Activated T-helper 2 cell treated with anti-CD3 and anti-CD28 coated beads, Interferon-gamma antibody, Interleukin-2, Interleukin-4, amounts not matched to agents 10 μg/mL and 5 μg/mL and 100 μg/mL, durations not matched to agents 14 hours and 24 hours and 36 hours (primary cell): ENCODE measurements at regions of chr7 and their contacts with region 1.

Region 1: DNA sequence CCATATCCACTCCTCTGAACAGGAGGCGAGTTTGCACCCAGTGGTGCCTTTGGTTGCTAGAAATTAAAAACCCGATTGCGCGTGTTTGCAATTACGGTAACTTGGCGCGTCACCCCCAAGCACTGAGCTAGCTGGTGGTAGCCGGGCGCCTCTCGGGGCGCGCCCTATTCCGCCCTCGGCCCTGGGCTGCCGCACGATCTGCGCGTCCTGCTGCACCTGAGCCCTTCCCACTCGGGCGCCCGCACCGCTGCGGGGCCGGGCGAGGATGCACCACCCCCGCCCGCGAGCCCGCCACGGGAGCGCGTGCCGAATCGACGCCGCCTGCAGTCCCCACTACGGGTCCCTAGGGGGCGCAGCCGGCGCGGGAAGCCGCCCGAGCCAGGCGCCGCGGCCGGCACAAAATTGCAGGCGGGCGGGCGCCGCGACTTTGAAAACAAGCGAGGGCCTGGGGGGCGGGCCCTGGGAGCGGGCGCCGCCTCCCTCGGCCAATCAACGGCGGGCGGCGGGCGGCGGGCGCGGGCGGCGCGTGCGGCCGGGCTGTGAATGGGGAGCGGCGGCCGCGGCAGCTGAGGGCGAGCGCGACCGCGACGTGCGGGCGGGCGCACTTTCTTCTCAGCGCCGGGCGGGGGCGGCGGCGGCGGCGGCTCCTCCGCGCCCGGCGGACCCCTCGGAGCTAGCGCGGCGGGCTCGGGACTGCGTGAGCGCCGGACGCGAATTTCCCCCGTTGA is at the start of gene SDK1:
- DNase-seq: peak; percentile 87
- H3K4me3 Mint-ChIP-seq: peak within 1 kb of the TSS; percentile 66
- H3K27ac Mint-ChIP-seq: no peak within 1 kb of the TSS
- H3K4me1 Mint-ChIP-seq: peaks cover 17% of the 10 kb centered on the region
- H3K27me3 Mint-ChIP-seq: peaks cover 59% of the 10 kb centered on the region
- total RNA-seq, gene SDK1: 0.48 and 1.2 TPM in 2 replicates

Region 2: DNA sequence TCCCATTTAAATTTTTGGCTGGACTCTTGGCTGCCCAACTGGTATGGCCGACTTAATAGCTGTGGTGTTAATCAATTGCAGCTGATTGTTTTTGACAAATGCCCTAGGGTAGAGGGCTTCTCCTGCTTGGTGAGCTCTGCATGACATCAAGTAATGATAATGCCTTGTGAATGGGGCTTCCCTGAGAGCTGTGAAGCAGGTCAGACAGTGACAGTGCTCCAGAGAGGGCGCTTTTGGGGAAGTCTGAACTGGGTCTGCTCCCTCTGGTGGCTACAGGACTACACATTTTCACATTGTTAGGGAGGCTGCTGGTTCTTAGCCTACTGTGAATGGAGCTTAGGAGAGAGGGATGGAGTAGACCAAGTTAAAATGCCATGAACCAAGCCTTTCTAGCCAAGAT is 99.0 kb after region 1 on chr7:
- intact Hi-C with region 1: loop called (anchors 10 kb)
- DNase-seq: no peak
- H3K4me3 Mint-ChIP-seq: no peak overlapping the region
- H3K27ac Mint-ChIP-seq: no peak overlapping the region
- H3K4me1 Mint-ChIP-seq: no peaks in the 10 kb centered on the region
- H3K27me3 Mint-ChIP-seq: peaks cover 17% of the 10 kb centered on the region

Region 3: GRCh38 chr7:3461923-3462322 is 161.1 kb after region 1 on chr7:
- intact Hi-C with region 1: loop called (anchors 2 kb)
- DNase-seq: peak; percentile 61
- H3K4me3 Mint-ChIP-seq: peak overlapping the region; percentile 55
- H3K27ac Mint-ChIP-seq: peak overlapping the region; percentile 76
- H3K4me1 Mint-ChIP-seq: peaks cover 35% of the 10 kb centered on the region
- H3K27me3 Mint-ChIP-seq: no peaks in the 10 kb centered on the region

Region 4: GRCh38 chr7:3673524-3673923 is 372.7 kb after region 1 on chr7:
- intact Hi-C with region 1: loop called (anchors 2 kb)
- DNase-seq: peak; percentile 11
- H3K4me3 Mint-ChIP-seq: no peak overlapping the region
- H3K27ac Mint-ChIP-seq: no peak overlapping the region
- H3K4me1 Mint-ChIP-seq: no peaks in the 10 kb centered on the region
- H3K27me3 Mint-ChIP-seq: no peaks in the 10 kb centered on the region

Region 5: GRCh38 chr7:3897438-3898385 is 596.9 kb after region 1 on chr7:
- intact Hi-C with region 1: loop called (anchors 1 kb)
- DNase-seq: peak; percentile 16
- H3K4me3 Mint-ChIP-seq: no peak overlapping the region
- H3K27ac Mint-ChIP-seq: no peak overlapping the region
- H3K4me1 Mint-ChIP-seq: no peaks in the 10 kb centered on the region
- H3K27me3 Mint-ChIP-seq: peaks cover 2% of the 10 kb centered on the region